Aorta (tissue), 5 donors: ENCODE measurements at regions of chr18 and their contacts with region 1.

Region 1: DNA sequence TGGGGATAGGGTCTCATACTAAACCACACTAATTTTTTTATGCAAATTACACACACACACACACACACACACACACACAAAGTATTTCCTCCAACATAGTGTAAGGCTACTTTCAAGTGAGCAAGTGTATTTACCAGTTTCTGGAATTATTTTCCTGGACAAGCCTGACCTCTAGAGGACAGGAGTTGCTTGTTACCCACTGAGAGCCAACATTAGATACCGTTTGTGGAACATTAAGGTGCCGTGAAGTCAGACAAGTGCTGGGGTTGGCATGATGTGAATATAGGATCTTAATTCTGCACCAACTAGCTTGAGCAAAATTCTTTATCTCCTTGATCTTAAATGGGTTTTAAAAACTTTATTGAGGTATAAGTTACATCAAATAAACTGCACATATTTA is 39.3 kb upstream of the SERPINB2 start:
- DNase-seq: no peak
- ATAC-seq: peak; percentile 52
- H3K4me3 ChIP-seq: no peak overlapping the region
- H3K27ac ChIP-seq: no peak overlapping the region
- H3K4me1 ChIP-seq: no peaks in the 10 kb centered on the region
- H3K27me3 ChIP-seq: no peaks in the 10 kb centered on the region

Region 2: DNA sequence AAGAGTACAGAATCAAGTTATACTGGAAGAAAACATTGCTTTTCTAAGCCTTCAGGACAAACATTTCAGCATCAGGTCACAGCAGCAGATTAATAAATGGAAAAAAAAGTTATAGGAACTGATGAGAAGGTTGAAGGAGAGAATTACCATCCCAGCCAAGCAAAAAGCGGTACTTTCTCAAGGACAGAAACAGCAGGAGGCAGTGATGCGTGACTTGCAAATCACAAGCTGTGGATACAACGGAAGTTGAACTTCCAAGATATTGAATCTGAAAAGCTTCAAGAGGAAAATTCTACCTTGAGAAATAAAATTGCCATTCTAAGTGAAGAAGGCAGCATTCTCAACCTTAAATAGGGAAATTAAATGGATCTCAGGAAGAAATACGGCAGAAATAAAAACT is 324.5 kb before region 1 on chr18:
- intact Hi-C with region 1: loop called (anchors 2 to 5 kb)
- DNase-seq: no peak
- ATAC-seq: no peak
- H3K4me3 ChIP-seq: no peak overlapping the region
- H3K27ac ChIP-seq: no peak overlapping the region
- H3K4me1 ChIP-seq: no peaks in the 10 kb centered on the region
- H3K27me3 ChIP-seq: no peaks in the 10 kb centered on the region

Region 3: GRCh38 chr18:63578357-63578958 is 269.7 kb before region 1 on chr18:
- intact Hi-C with region 1: loop called in 1 of 2 experiments (anchors 5 kb)
- DNase-seq: no peak
- ATAC-seq: no peak
- H3K4me3 ChIP-seq: no peak overlapping the region
- H3K27ac ChIP-seq: no peak overlapping the region
- H3K4me1 ChIP-seq: no peaks in the 10 kb centered on the region
- H3K27me3 ChIP-seq: no peaks in the 10 kb centered on the region

Region 4: DNA sequence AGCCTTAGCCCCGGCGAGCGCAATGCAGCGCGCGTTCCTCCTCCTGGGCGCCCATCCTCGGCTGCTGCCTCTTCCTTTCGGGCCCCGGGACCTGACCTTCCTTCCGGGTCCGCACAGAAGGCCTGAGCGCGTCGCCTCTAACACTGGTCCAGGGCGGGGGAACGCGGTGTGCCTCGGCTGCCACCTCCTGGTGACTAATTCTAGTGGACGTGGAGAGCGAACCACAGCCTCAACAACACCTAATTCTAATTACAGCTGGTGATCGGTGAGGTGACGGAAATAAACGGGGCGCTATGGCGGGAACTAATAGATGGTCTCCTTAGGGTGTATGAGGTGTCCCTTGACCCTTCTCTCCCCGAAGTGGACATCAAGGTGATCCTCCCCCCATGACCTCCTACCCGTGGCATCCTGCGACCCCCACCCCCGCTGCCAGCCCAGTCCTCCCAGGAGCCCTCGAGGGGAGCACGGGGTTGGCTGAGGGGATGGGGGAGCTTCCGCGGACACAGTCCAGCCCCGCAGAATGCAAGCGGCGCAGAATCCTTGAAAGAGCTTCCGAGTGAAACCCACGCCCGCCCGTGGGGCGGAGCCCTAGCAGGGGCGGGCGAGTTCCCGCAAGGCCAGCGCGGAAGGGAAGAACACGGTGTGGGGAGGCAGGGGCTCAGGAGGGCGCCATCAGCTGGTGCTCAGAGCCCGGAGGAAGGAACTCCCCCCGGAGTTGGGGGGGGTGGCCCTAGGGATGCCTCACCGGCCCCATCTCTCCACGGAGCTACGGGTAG is 88.2 kb after region 1 on chr18:
- intact Hi-C with region 1: loop called in 1 of 2 experiments (anchors 10 kb)
- DNase-seq: peak; percentile 89 to 93
- ATAC-seq: peak; percentile 95
- H3K4me3 ChIP-seq: peak overlapping the region; percentile 23 to 33
- H3K27ac ChIP-seq: no peak overlapping the region
- H3K4me1 ChIP-seq: no peaks in the 10 kb centered on the region
- H3K27me3 ChIP-seq: no peaks in the 10 kb centered on the region